Posterior cingulate gyrus (tissue), 11 donors: ENCODE measurements at regions of chr17 and their contacts with region 1.

Region 1: DNA sequence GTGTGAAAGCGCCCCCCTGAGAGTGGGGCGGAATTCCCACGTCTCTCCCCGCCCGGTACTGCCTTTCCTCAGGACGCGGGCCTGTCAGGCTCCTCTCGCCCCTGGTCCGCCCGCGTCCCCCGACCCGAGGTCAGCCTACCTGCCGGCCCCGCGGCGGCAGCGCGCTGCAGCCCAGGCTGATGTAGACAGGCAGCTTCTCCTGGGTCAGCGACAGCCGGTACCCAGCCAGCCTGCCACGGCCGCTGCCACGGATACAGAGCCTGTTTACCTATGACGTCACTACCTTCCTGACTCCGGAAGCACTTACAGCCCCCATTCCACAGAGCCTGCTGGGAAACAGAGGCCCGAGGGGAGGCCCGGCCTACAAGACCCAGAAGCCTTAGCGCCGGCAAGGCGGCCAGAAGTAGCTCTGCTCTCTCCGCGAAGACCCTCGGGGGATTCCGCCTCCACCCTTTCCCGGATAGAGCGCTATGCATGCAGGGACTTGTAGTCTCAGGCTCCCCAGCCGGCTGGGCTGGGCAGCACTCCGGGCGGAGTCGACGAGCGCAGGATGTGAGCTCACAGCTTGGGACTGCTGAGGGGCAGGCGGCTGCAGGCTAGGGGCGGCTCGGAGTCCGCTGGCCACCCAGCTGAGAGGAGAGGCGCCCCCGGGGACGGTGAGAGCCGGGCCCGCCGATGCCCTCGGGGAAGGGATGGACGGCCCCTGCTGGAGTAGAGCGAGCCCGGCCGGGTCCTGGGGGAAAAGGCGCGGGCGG is at the starts of genes IFT20 and TNFAIP1:
- DNase-seq: peak; percentile 98 to 100 (median 99)

Region 2: GRCh38 chr17:28033972-28034714 is 301.2 kb before region 1 on chr17:
- intact Hi-C with region 1: no loop called
- DNase-seq: peak in 4 of 10 donors; percentile 24 to 77 (median 29)

Region 3: GRCh38 chr17:28216528-28216927 is 118.8 kb before region 1 on chr17:
- intact Hi-C with region 1: no loop called
- DNase-seq: no peak

Region 4: GRCh38 chr17:28318759-28319660 is 16.4 kb before region 1 on chr17 and contains the start of gene TMEM97:
- intact Hi-C with region 1: loop called (anchors 2 kb)
- DNase-seq: peak; percentile 92 to 100 (median 98)

Region 5: GRCh38 chr17:28357061-28357900 is 21.9 kb after region 1 on chr17 and contains the start of gene POLDIP2:
- intact Hi-C with region 1: loop called (anchors 1 kb)
- DNase-seq: peak; percentile 92 to 99 (median 96)